Posterior cingulate gyrus (tissue), 11 donors: ENCODE measurements at regions of chrX and their contacts with region 1.

Region 1: DNA sequence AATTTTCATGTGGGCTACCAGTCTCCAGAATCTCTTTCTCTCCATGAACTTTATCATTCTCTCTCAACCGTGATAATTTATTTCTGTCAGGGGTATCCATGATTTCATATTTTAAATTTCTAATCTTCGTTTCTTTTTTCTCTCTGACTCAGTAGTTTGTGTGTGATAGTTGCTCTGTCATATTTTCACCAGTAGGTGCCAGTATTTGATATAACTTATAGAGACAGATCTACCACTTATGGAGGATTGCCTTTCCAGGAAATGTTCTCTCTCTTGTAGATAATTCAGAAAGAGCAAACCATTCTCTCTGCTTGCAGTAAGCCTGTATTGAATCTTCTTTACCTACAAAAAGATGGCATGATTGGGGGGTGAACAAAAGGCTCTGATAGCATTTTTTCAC is 79.3 kb upstream of the DYNLT3 start:
- DNase-seq: no peak

Region 2: DNA sequence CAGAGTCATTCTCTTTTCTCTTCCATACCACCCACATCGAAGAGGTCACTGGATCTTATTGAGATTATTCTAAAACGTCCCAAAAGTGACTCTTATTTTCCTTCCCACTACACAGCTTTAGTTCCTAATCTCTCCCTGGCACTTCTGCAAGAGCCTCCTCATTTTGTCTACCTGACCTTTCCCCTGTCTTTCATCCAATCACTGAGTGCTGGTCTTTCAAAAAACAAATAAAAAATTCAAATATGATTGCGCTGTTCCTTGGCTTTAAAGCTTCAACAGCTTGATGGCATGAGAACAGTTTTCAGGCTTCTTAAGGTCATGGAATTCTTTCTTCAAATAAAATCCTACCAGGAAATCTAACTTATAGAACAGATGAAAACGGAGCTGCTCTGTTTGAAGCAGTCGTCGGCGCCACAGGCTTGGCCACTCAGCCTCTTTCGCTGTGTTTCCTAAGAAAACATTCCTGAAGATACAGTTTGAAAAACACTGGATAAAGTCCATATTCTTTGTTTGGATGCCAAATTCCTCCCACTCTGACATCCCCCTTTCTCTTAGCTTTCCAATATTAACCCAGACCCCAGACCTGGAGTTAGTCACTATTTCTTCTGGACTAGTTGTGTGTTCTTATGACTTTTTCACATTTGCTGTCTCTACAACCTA is 92.2 kb after region 1 on chrX:
- intact Hi-C with region 1: no loop called
- DNase-seq: peak in 1 of 10 donors; percentile 44

Region 3: GRCh38 chrX:38166478-38167083 is 239.9 kb after region 1 on chrX:
- intact Hi-C with region 1: loop called (anchors 5 kb)
- DNase-seq: no peak

Region 4: DNA sequence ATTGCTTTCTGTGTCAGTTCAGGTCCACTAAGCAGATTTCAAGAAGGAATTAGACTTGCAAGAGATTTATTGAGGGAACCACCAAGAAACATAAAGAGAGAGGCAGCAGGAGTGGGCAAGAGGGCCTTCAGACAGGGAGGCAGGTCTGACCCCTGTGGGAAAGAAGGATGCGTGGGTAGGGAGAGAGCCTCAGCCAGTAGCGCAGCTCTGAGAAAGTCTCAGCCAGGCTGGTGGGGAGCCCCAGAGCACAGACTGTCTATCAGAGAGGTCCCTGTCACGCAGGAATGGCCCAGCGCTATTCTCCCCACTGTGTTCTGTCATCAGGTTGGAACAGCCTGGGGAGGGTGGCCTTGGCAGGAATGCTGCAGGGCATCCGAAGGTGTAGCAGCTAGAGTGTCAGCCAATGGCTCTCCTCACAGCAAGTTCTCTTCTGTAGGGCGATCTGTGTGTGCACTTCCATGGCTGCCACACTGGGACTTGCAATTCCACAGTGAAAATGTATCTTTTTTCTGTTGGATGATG is 473.8 kb after region 1 on chrX:
- intact Hi-C with region 1: no loop called
- DNase-seq: no peak